AG04449 (cell line): ENCODE measurements at regions of chr19 and their contacts with region 1.

Region 1: DNA sequence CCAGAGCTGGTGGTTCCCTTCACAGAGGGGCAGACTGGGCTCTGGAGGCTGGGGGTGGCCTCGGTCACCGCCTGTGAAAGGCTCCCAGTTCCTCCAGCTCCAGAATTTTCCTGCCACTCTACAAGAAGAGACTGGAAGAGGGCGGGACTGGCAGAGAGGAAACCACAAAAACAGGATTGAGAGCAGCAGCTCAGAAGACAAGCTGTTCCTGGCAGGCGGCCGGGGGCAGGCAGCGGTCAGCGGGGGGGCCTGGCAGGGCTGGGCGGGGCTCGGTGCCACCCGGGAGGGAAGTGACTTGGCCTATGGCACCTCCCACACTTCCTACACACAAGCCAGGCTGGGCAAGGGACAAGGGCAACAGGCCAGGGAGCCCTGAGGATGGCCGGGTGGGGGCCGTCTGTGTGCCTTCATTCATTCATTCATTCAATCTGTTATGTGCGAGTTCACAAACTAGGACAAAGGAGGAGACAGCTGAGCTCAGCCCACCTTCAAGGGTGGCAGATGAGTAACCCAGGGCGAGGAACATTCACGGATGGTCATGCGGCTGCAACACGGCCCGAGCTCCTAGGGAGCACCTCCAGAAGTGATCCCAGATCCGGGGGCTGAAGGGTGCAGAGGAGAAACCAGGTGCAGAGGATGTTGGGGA is 16.9 kb upstream of the BTBD2 start:
- DNase-seq: no peak
- H3K4me3 ChIP-seq: no peak overlapping the region; the same call in 1 of the 2 replicates
- CTCF ChIP-seq: no peak

Region 2: DNA sequence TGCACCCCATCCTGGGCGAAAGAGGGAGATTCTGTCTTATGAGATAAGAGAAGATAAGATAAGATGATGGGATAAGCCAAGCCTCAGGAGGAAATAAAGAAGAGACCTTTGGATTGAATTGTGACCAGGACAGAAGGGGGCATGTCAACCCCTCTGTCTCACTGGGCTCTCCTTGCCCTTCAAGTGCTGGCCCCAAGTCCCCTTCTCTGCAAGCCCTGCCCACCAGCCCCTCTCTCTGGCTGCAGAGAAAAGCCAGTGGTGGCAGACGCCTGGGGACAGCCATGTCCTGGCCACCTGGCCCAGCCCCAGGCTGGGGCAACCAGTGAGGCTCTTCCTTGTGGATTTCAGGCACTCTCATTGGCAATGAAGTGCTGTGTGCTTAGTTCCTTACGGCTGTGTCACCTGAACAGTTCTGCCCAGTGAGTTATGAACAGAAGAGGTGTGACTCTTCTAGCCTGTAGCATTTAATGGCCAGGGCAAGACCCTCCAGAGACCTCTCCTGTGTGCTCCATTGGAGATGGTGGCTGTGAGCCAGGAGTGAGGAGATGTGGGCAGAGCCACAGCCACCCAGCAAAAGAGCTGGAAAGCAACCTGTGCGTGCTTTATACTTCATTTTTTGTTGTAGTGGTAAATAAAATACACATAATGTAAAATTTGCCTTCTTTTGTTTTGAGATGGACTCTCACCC is 10.8 kb before region 1 on chr19:
- CTCF ChIA-PET with region 1: interaction called, 22 read pairs
- POLR2A ChIA-PET with region 1: no interaction called
- DNase-seq: no peak
- H3K4me3 ChIP-seq: no peak overlapping the region
- CTCF ChIP-seq: no peak

Region 3: DNA sequence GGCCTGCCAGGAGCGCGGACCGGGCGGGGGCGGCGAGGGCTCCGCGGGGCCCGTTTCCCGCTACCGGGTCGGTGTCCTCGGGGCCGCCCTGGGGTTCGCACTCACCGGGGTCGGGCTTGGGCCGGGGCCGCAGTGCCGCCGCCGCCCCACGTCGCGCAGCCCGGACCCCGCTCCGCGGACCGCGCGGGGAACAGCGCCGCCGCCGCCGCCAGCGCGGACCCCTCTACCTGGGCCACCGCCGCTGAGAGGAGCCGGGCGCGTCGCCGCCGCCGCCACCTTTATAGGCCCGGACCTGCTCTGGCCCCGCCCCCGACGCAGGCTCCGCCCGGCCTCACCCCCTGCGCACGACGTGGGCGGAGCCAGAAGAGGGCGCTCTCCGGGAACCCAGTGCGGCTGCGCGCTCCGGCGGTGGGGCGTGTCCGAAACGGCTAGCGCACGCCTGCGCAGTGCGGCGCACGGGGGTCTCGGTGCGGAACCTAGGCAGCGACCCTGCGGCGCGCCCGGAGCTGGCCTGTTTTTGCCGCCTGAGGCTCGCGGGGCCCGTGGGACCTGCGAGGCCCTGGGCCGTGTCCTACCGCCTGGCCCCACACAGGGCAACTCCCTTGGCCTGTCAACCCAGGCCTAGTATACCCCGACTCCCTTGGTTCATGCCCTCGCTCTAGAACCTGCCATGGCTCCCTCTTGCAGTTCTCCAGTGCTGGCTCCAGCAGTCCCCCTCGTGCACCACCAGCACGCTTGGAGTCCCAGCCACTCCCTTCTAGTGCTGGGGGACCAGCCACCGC is 18.8 kb after region 1 on chr19 and contains the start of gene MKNK2:
- CTCF ChIA-PET with region 1: interaction called, 4 read pairs
- POLR2A ChIA-PET with region 1: interaction called, 11 read pairs
- DNase-seq: no peak
- H3K4me3 ChIP-seq: peak within 1 kb of the TSS; percentile 73
- CTCF ChIP-seq: peak; percentile 79

Region 4: GRCh38 chr19:2246801-2247361 is 214.5 kb after region 1 on chr19:
- CTCF ChIA-PET with region 1: no interaction called
- POLR2A ChIA-PET with region 1: no interaction called
- DNase-seq: no peak
- H3K4me3 ChIP-seq: no peak overlapping the region
- CTCF ChIP-seq: no peak